OCI-LY7 (cell line): ENCODE measurements at regions of chr16 and their contacts with region 1.

Region 1: GRCh38 chr16:23556881-23557778 is at the starts of genes EARS2 and UBFD1:
- DNase-seq: peak; percentile 98
- H3K4me3 ChIP-seq: peak within 1 kb of the TSS; percentile 98
- H3K27ac ChIP-seq: peak within 1 kb of the TSS; percentile 78
- H3K4me1 ChIP-seq: peaks cover 41% of the 10 kb centered on the region
- CTCF ChIP-seq: peak; percentile 83
- total RNA-seq, gene EARS2: 32.3 and 42.1 TPM in 2 replicates
- total RNA-seq, gene UBFD1: 39.1 and 42.4 TPM in 2 replicates

Region 2: GRCh38 chr16:23504451-23505179 is 52.5 kb before region 1 on chr16:
- CTCF ChIA-PET with region 1: interaction called, 4 read pairs
- POLR2A ChIA-PET with region 1: interaction called, 12 read pairs
- intact Hi-C with region 1: loop called (anchors 2 kb)
- DNase-seq: peak; percentile 34
- H3K4me3 ChIP-seq: peak overlapping the region; percentile 99
- H3K27ac ChIP-seq: peak overlapping the region; percentile 91
- H3K4me1 ChIP-seq: peaks cover 77% of the 10 kb centered on the region
- CTCF ChIP-seq: peak; percentile 34; the same call in 1 of the 2 replicates

Region 3: DNA sequence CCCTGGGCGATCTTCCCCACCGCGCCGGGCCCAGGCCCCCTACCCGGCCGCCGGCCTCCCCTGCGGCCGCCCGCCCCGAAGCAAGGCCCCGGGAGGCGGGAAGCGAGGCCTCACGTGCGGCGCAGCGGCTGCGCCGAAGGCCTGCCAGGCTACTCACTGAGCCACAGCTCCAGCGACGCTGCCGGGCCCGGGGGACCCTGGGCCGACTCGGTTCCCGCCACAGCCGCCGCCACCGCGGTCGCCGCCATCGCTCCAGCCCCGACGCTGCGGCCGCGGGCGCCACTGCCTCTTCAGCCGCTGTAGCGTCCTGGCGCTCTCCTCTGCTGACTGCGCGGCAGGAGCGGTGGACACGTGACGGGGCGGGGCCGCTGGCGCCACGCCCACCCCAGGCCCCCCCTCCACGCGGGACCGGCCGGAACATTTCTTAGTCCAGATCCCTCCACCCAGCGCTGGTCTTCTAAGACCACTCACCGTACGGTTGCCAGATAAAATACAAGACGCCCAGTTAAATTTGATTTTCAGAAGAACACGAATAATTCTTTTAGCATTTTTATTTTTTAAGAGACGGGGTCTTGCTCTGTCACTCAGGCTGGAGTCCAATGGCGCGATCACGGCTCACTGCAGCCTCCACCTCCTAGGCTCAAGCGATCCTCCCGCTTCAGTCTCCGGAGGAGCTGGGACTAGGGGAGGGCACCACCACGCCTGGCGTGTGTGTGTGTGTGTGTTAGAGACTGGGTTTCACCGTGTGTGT is 46.8 kb before region 1 on chr16 and contains the start of gene GGA2:
- CTCF ChIA-PET with region 1: interaction called, 4 read pairs
- POLR2A ChIA-PET with region 1: interaction called, 12 read pairs
- intact Hi-C with region 1: loop called (anchors 2 kb)
- DNase-seq: peak; percentile 91
- H3K4me3 ChIP-seq: peak within 1 kb of the TSS; percentile 99
- H3K27ac ChIP-seq: peak within 1 kb of the TSS; percentile 91
- H3K4me1 ChIP-seq: peaks cover 62% of the 10 kb centered on the region
- CTCF ChIP-seq: no peak
- total RNA-seq, gene GGA2: 213 and 256 TPM in 2 replicates

Region 4: DNA sequence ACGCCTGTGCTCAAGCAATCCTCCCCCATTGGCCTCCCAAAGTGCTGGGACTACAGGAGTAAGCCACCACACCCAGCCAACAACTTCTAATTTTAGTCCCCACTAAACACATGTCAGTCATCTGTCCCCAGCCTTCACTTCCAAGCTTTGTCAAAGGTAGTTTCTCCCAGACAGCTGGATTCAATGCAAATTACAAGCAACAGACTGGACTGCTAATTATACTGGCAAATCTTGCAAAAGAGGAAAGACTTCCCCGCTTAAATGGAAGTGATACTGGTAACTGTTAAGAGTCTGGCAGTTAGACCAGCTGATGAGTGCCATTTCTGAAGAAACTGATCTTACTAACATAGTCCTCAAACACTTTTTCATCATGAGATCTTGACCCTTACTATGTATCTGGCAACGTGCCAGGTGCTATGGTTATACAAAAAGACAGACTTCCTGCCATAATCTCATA is 38.7 kb before region 1 on chr16:
- CTCF ChIA-PET with region 1: no interaction called
- POLR2A ChIA-PET with region 1: interaction called, 3 read pairs
- intact Hi-C with region 1: loop called (anchors 1 kb)
- DNase-seq: peak; percentile 96
- H3K4me3 ChIP-seq: peak overlapping the region; percentile 33
- H3K27ac ChIP-seq: peak overlapping the region; percentile 100
- H3K4me1 ChIP-seq: peaks cover 92% of the 10 kb centered on the region
- CTCF ChIP-seq: no peak

Region 5: DNA sequence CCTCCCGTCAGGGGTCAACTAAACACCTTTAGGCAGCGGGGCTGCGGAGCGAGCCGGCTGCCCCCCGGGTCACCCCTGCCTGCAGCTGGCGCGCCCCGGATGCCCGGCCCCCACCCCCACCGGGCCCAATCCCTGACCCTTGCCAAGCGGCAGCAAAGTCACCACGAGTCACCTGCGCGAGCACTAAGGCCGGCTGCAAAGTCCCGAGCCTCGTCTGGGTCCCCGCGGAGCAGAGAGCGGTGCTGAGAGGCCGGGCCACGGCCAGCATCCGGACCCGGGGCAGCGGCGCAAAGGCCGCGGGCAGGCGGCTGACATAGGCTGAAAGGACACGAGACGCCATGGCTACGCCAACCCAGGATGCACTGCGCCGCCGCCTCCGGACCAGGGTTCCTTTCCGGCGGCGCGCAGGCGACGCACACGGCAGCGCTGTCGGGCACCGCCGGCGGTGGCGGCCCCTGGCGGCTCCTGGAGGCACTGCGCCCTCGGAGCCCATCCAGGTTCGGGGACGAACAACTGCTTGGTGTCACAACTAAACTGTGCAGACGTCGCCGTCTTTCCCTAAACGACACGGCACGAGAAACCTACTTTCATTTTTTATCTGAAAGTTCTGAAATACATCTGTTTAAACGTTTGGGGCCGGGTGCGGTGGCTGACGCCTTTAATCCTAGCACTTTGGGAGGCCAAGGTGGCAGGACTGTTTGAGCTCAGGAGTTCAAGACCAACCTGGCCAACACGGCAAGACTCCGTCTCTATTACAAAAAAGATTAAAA is 39.0 kb after region 1 on chr16 and contains the start of gene NDUFAB1:
- CTCF ChIA-PET with region 1: interaction called, 7 read pairs
- POLR2A ChIA-PET with region 1: no interaction called
- intact Hi-C with region 1: loop called (anchors 1 kb)
- DNase-seq: peak; percentile 93
- H3K4me3 ChIP-seq: peak within 1 kb of the TSS; percentile 96
- H3K27ac ChIP-seq: peak within 1 kb of the TSS; percentile 57
- H3K4me1 ChIP-seq: peaks cover 21% of the 10 kb centered on the region
- CTCF ChIP-seq: peak; percentile 82
- total RNA-seq, gene NDUFAB1: 111 and 159 TPM in 2 replicates

Region 6: GRCh38 chr16:23640931-23641765 is 84.0 kb after region 1 on chr16 and contains the starts of genes DCTN5 and PALB2:
- CTCF ChIA-PET with region 1: no interaction called
- POLR2A ChIA-PET with region 1: interaction called, 5 read pairs
- intact Hi-C with region 1: loop called (anchors 1 kb)
- DNase-seq: peak; percentile 96
- H3K4me3 ChIP-seq: peak within 1 kb of the TSS; percentile 91
- H3K27ac ChIP-seq: peak within 1 kb of the TSS; percentile 74
- H3K4me1 ChIP-seq: peaks cover 17% of the 10 kb centered on the region
- CTCF ChIP-seq: no peak
- total RNA-seq, gene DCTN5: 37.3 and 42.9 TPM in 2 replicates
- total RNA-seq, gene PALB2: 15.1 and 16.6 TPM in 2 replicates

Region 7: DNA sequence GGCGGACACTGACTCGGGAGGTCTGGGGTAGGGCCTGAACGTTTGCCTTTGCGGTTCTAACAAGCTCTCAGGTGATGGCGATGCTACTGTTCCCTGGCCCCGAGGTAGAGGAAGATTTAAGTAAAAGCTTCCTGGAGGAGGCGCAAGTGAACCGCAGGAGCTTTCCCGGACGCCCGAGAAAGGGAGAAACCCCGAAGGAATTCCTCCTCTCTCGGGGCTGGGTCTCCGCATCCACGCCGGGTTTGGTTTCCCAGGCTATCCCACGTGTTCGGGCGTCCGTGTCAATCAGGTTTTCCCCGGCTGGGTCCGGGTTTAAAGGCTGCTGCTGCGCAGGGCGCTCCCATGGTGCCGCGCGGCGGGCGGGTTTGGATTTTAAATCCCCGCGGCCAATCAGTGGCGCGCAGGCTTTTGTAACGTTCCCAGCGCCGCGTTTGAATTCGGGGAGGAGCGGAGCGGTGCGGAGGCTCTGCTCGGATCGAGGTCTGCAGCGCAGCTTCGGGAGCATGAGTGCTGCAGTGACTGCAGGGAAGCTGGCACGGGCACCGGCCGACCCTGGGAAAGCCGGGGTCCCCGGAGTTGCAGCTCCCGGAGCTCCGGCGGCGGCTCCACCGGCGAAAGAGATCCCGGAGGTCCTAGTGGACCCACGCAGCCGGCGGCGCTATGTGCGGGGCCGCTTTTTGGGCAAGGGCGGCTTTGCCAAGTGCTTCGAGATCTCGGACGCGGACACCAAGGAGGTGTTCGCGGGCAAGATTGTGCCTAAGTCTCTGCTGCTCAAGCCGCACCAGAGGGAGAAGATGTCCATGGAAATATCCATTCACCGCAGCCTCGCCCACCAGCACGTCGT is 121.5 kb after region 1 on chr16 and contains the start of gene PLK1:
- CTCF ChIA-PET with region 1: no interaction called
- POLR2A ChIA-PET with region 1: no interaction called
- intact Hi-C with region 1: loop called (anchors 1 kb)
- DNase-seq: peak; percentile 88
- H3K4me3 ChIP-seq: peak within 1 kb of the TSS; percentile 98
- H3K27ac ChIP-seq: peak within 1 kb of the TSS; percentile 69
- H3K4me1 ChIP-seq: peaks cover 28% of the 10 kb centered on the region
- CTCF ChIP-seq: peak; percentile 62
- total RNA-seq, gene PLK1: 59.6 and 69.5 TPM in 2 replicates